Activated naive CD4-positive, alpha-beta T cell treated with anti-CD3 and anti-CD28 coated beads for 36 hours (primary cell): ENCODE measurements at regions of chr4 and their contacts with region 1.

Region 1: GRCh38 chr4:47032415-47033106 is 1.2 kb downstream of the GABRB1 start:
- DNase-seq: peak; percentile 66
- H3K4me3 Mint-ChIP-seq: peak overlapping the region; percentile 58
- H3K27ac Mint-ChIP-seq: no peak overlapping the region
- H3K4me1 Mint-ChIP-seq: peaks cover 14% of the 10 kb centered on the region
- H3K27me3 Mint-ChIP-seq: peaks cover 40% of the 10 kb centered on the region

Region 2: DNA sequence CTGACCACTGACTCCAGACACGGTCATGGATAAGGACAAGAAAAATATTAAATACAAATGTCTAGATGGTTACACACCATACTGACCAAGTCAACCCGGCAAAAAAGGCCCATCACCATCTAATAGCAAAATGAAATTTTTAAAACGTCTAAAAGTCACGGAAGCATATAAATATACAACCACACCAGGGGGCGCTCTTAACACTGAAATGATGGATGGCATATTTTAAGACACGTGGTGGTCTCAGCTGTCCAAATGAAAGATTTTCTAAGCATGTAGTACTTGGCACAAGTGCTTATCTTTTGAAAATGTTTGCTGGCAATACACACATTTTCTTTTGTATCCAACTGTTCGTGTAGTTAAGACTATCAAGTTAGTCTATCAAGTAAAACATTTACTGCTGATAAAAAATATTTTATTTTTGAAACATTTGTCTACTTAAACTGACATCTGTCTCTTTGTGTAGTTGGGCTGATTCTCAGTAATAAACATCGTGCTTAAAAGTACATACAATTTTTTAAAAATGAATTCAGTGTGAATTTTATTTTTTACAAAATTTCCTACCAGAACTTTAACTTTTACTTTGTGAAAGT is 188.1 kb before region 1 on chr4:
- CTCF ChIA-PET with region 1: interaction called, 5 read pairs
- intact Hi-C with region 1: loop called (anchors 1 kb)
- DNase-seq: peak; percentile 66
- H3K4me3 Mint-ChIP-seq: no peak overlapping the region
- H3K27ac Mint-ChIP-seq: no peak overlapping the region
- H3K4me1 Mint-ChIP-seq: no peaks in the 10 kb centered on the region
- H3K27me3 Mint-ChIP-seq: no peaks in the 10 kb centered on the region

Region 3: DNA sequence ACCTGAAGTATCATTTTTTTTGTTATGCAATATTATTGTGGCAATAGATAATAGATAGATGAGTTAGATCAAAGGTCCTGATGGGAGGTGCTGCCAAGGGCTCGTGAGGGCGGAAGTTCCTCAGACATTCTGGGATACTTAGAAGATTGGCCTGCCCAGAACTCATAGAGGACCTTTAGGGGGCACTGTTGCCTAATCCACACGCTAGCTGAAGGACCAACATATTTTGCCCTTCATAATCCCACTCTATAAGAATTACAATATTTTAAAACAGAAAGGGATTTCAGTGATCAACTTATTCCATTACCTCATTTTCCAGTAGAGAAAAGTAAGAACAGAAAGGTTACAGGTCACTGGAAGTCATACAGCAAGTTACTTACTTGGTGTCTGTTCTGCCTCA is 100.6 kb before region 1 on chr4:
- CTCF ChIA-PET with region 1: interaction called, 4 read pairs
- intact Hi-C with region 1: loop called (anchors 1 kb)
- DNase-seq: peak; percentile 24
- H3K4me3 Mint-ChIP-seq: no peak overlapping the region
- H3K27ac Mint-ChIP-seq: no peak overlapping the region
- H3K4me1 Mint-ChIP-seq: no peaks in the 10 kb centered on the region
- H3K27me3 Mint-ChIP-seq: peaks cover 9% of the 10 kb centered on the region